Ovary (tissue), 10 donors: ENCODE measurements at regions of chr12 and their contacts with region 1.

Region 1: DNA sequence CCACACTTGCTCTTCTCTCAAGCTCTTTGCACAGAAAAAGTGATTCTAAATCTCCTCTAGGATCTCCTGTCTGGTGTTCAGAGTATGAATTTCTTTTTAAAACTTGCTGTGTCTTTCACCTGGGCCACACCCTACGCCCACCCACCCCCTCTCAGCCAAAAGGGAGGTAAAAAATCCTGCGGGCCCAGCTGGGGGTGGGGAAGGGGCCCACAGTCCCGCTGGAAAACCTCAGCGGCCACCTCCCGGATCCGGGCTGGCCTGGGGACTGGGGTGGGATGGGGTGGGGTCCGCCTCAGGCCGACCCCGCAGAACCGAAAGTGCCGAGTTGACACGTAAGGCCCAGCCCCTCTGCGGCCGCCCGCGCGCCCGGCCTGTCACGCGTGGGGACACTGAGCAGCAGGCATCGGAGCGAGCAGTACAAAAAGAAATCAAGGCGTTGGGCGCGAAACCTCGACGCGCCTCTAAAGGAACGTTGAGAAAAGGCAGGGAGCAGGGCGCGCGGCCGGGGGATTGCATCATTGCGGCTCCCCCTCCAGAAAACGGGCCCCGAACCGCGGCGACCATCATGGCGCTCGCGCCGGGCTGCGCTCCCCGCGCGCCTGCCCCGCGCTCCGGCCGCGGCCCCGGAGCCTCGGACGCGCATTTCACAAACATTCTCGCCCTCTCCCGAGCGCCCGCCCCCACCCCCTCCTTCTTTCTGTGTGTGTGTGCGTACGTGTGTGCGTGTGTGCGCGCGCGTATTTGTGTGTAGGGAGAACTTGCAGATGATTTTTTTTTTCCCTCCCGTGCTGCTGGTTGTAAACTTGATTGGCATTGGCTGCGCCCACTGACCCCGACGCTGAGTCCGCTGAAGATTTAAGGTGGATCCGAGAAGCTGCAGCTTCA is 7.7 kb downstream of the CDKN1B start:
- DNase-seq: peak; percentile 90 to 95 (median 93)
- H3K4me3 ChIP-seq: peak overlapping the region; percentile 77
- H3K27ac ChIP-seq: peak overlapping the region; percentile 99
- H3K4me1 ChIP-seq: peaks cover 4% of the 10 kb centered on the region
- H3K27me3 ChIP-seq: no peaks in the 10 kb centered on the region
- CTCF ChIP-seq: peak in 2 of 3 donors; percentile 38 to 42
- EP300 ChIP-seq: no peak
- POLR2A ChIP-seq: peak; percentile 87

Region 2: DNA sequence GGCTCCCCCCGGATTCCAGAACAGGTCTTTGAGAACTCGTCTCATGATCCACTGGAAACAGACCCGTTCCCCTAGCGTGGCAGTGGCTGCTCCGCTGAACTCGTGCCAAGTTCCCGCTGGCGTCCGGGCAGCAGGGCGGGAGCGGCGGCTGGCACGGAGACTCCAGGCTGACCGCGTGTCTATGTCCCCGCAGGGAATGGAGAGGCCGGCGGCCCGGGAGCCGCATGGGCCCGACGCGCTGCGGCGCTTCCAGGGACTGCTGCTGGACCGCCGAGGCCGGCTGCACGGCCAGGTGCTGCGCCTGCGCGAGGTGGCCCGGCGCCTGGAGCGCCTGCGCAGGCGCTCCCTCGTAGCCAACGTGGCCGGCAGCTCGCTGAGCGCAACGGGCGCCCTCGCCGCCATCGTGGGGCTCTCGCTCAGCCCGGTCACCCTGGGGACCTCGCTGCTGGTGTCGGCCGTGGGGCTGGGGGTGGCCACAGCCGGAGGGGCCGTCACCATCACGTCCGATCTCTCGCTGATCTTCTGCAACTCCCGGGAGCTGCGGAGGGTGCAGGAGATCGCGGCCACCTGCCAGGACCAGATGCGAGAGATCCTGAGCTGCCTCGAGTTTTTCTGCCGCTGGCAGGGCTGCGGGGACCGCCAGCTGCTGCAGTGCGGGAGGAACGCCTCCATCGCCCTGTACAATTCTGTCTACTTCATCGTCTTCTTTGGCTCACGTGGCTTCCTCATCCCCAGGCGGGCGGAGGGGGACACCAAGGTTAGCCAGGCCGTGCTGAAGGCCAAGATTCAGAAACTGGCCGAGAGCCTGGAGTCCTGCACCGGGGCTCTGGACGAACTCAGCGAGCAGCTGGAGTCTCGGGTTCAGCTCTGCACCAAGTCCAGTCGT is 62.1 kb after region 1 on chr12:
- intact Hi-C with region 1: loop called in 1 of 4 experiments (anchors 5 kb)
- DNase-seq: peak; percentile 84 to 92 (median 89)
- H3K4me3 ChIP-seq: peak overlapping the region; percentile 61
- H3K27ac ChIP-seq: peak overlapping the region; percentile 86 to 95
- H3K4me1 ChIP-seq: peaks cover 10% of the 10 kb centered on the region
- H3K27me3 ChIP-seq: no peaks in the 10 kb centered on the region
- CTCF ChIP-seq: peak in 2 of 3 donors; percentile 40 to 66
- EP300 ChIP-seq: no peak
- POLR2A ChIP-seq: peak; percentile 71

Region 3: GRCh38 chr12:12890815-12891645 is 166.1 kb after region 1 on chr12 and contains the start of gene GPRC5A:
- intact Hi-C with region 1: loop called in 2 of 4 experiments (anchors 10 kb)
- DNase-seq: peak; percentile 94 to 98 (median 96)
- H3K4me3 ChIP-seq: peak within 1 kb of the TSS; percentile 46
- H3K27ac ChIP-seq: peak within 1 kb of the TSS; percentile 87 to 97
- H3K4me1 ChIP-seq: peaks cover 4% of the 10 kb centered on the region
- H3K27me3 ChIP-seq: no peaks in the 10 kb centered on the region
- CTCF ChIP-seq: peak; percentile 6 to 30 (median 16)
- EP300 ChIP-seq: peak; percentile 70
- POLR2A ChIP-seq: peak; percentile 93
- total RNA-seq, gene GPRC5A: 24.1 to 71.5 (median 43.5) TPM